PC-9 (cell line): ENCODE measurements at regions of chr15 and their contacts with region 1.

Region 1: GRCh38 chr15:73717802-73718201 is 33.6 kb downstream of the CD276 start:
- DNase-seq: no peak
- H3K4me3 ChIP-seq: no peak overlapping the region
- H3K27ac ChIP-seq: no peak overlapping the region
- H3K4me1 ChIP-seq: no peaks in the 10 kb centered on the region
- H3K27me3 ChIP-seq: peaks cover 18% of the 10 kb centered on the region
- CTCF ChIP-seq: no peak

Region 2: GRCh38 chr15:73704869-73705645 is 12.7 kb before region 1 on chr15:
- CTCF ChIA-PET with region 1: interaction called, 17 read pairs
- POLR2A ChIA-PET with region 1: no interaction called
- intact Hi-C with region 1: no loop called
- DNase-seq: peak in 1 of 2 experiments; percentile 53
- H3K4me3 ChIP-seq: no peak overlapping the region
- H3K27ac ChIP-seq: no peak overlapping the region
- H3K4me1 ChIP-seq: no peaks in the 10 kb centered on the region
- H3K27me3 ChIP-seq: no peaks in the 10 kb centered on the region
- CTCF ChIP-seq: peak; percentile 81

Region 3: DNA sequence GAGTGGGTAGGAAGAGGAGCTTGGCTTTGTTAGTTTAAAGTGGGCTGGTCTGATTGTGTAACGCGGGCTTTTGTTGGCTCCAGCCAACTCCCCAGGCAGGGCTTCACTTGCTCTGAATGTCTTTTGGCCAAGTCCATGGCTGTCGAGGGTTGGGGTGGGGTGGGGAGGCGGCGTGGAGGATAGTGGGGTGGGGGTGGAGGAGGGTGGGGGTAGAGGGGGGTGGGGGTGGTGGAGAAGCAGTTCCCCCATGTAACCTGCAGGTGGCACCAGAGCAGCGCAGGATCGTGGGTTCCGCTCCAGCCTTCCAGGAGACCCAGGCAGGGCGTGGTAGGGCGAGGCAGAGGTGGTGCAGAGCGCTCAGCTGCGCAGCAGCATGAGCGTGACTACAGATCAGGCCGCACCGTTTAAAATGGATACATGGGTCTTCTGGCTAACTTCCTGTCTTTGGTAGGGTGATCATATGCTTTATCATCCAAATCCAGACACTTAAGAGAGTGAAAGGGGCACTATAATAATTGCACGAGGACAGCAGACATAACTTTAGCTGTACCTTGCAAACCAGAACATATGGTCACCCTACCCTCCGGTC is 336.2 kb after region 1 on chr15:
- CTCF ChIA-PET with region 1: no interaction called
- POLR2A ChIA-PET with region 1: no interaction called
- intact Hi-C with region 1: no loop called
- DNase-seq: peak; percentile 46 to 64
- H3K4me3 ChIP-seq: no peak overlapping the region
- H3K27ac ChIP-seq: no peak overlapping the region
- H3K4me1 ChIP-seq: peaks cover 38% of the 10 kb centered on the region
- H3K27me3 ChIP-seq: no peaks in the 10 kb centered on the region
- CTCF ChIP-seq: peak; percentile 57